SK-N-SH (cell line): ENCODE measurements at regions of chr1 and their contacts with region 1.

Region 1: DNA sequence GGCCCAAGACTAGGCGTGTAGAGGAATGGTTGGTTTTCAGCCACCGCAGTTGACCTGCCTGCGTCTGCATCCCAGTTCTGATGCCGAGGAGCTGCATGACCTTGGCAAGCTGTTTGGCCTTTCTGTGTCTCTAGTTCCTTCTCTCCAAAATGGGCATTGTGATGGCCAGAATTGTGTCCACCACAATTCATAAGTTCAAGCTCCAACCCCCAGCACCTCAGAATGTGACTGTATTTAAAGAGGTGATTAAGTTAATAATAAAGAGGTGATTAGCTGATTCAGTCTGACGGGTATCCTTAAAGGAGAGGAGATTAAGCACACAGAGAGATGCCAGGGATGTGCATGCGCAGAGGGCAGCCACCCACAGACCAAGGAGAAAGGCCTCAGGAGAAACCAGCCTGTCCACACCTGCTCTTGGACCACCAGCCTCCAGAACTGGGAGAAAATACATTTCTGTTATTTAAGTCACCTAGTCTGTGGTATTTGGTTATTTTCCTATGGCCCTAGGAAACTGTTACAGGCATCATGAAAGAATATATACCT is 28.5 kb downstream of the MAB21L3 start:
- DNase-seq: no peak
- H3K4me3 ChIP-seq: no peak overlapping the region
- H3K27ac ChIP-seq: no peak overlapping the region
- H3K4me1 ChIP-seq: peaks cover 0 to 3% of the 10 kb centered on the region in 2 experiments; a peak in 1 of 4 replicates
- H3K27me3 ChIP-seq: no peaks in the 10 kb centered on the region
- CTCF ChIP-seq: no peak
- EP300 ChIP-seq: no peak
- RAD21 ChIP-seq: no peak

Region 2: GRCh38 chr1:115952645-115953044 is 187.0 kb before region 1 on chr1:
- CTCF ChIA-PET with region 1: no interaction called
- POLR2A ChIA-PET with region 1: no interaction called
- DNase-seq: no peak
- H3K4me3 ChIP-seq: no peak overlapping the region
- H3K27ac ChIP-seq: no peak overlapping the region
- H3K4me1 ChIP-seq: no peaks in the 10 kb centered on the region
- H3K27me3 ChIP-seq: no peaks in the 10 kb centered on the region
- CTCF ChIP-seq: no peak
- EP300 ChIP-seq: no peak
- RAD21 ChIP-seq: no peak

Region 3: GRCh38 chr1:116122955-116123757 is 16.5 kb before region 1 on chr1:
- CTCF ChIA-PET with region 1: interaction called, 42 read pairs
- POLR2A ChIA-PET with region 1: no interaction called
- DNase-seq: peak; percentile 60
- H3K4me3 ChIP-seq: no peak overlapping the region
- H3K27ac ChIP-seq: no peak overlapping the region; a peak in 1 of 4 replicates
- H3K4me1 ChIP-seq: peaks cover 0 to 12% of the 10 kb centered on the region in 2 experiments; a peak in 2 of 4 replicates
- H3K27me3 ChIP-seq: 0 out of 2 replicates have a peak, but pooled peaks cover 6% of the 10 kb centered on the region
- CTCF ChIP-seq: no peak
- EP300 ChIP-seq: 0 out of 4 replicates have a peak, but pooled peaks of 1 of the 2 experiments have one; percentile 28
- RAD21 ChIP-seq: no peak

Region 4: DNA sequence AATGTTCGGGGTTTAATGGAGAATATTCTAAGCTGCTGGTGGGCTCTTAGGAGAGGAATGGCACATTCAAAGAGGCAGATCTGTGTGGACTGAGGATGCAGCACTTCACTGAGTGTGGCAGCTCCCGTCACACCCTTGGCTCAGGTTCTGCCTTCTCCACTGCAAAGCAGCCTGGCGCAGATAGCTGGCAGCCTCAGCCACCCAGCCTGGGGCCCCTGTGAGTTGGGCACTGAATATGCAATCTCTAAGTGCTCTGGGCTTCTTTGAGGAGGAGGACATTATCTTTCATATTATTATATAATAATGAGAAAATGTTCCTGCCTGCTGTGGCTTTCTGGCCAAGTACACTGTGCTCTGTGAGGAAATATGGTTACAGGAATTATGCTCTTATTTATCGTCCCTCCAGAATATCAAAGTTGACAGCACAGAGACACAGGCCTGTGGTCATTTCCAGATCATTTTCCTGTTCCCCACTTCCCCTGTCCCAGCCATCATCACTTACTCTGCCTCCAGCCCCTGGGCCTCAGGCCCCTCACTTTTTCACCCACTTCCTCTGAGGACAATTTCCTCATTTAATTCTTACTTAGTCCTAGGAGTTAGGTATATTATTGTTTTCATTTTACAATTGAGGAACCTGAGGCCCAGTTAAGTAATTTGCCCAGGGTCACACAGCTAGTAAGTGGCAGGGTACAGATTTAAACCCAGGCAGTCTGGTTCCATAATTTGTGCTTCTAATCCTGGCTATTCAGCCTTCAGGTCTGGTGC is 25.1 kb after region 1 on chr1:
- CTCF ChIA-PET with region 1: interaction called, 25 read pairs
- POLR2A ChIA-PET with region 1: no interaction called
- DNase-seq: peak; percentile 55
- H3K4me3 ChIP-seq: no peak overlapping the region
- H3K27ac ChIP-seq: peak overlapping the region in 1 of 2 experiments; percentile 69; a peak in 2 of 4 replicates
- H3K4me1 ChIP-seq: peaks cover 0 to 26% of the 10 kb centered on the region in 2 experiments; a peak in 1 of 4 replicates
- H3K27me3 ChIP-seq: no peaks in the 10 kb centered on the region
- CTCF ChIP-seq: no peak
- EP300 ChIP-seq: no peak
- RAD21 ChIP-seq: no peak

Region 5: DNA sequence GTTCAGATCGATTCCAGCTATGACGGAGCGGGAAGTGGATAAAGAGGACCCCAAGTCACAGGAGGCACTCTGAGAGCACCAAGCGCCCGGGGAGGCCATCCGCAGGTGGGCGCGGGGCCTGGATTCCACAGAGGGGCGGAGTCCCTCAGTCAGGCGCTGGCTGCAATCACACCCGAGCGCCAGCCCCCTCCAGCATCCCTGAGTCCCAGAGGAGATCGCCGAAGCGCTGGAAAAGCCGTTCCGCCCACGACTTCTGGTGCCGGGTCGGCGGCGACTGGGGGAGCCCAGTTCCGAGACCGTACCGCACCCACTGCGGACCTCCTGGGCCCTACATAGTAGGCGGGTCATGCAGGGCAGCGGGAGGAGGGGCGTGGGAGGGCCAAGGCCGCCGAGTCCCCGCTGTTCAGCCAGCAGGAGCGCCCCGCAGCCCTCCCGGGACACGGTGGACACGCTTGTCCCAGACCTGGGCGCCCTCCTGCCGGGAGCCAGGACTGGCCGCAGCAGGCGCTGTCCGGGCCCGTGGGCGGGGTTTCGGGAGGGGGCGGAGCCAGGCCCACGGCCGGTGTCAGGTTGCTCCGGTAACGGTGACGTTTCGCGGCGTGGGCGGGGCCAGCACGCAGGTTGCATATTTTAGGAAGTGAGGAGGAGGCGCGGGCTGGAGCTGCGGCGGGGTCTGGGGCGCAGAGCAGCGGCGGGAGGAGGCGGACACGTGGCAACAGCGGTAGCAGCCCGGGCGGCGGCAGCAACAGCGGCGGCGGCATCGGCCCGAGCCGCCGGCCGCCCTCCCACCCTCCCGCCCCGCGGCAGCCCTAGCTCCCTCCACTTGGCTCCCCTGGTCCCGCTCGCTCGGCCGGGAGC is 233.2 kb after region 1 on chr1 and contains the start of gene ATP1A1:
- CTCF ChIA-PET with region 1: interaction called, 16 read pairs
- POLR2A ChIA-PET with region 1: interaction called, 3 read pairs
- DNase-seq: peak; percentile 98
- H3K4me3 ChIP-seq: peak within 1 kb of the TSS; percentile 60 to 71
- H3K27ac ChIP-seq: peak within 1 kb of the TSS; percentile 83 to 98
- H3K4me1 ChIP-seq: peaks cover 29 to 36% of the 10 kb centered on the region in 2 experiments
- H3K27me3 ChIP-seq: no peaks in the 10 kb centered on the region
- CTCF ChIP-seq: no peak
- EP300 ChIP-seq: no peak
- RAD21 ChIP-seq: no peak; the same call in 1 of the 2 replicates
- polyA plus RNA-seq, gene ATP1A1: 233 and 235 TPM in 2 replicates

Region 6: DNA sequence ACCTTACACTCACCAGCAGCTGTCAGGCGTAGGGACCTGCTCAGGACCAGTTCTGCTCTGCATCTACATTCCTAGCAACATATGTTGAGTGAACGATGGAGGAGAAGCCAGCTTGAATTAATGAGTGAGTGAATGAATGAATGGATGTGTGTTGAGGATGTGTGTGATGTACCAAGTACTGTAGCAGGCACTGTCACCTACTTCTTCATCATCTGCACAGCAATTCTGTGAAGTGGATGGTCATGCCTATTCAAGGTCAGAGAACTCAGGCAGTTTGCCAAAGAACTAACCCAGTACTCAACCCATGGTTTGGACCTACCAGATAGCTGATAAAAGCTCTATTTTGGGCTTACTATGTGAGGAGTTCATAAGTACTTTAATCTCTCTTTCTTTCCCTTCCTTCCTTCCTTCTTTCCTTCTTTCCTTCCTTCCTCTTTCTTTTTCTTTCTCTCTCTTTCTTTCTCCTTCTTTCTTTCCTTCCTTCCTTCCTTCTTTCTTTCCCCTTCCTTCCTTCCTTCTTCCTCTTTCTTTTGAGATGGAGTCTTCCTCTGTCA is 290.2 kb after region 1 on chr1:
- CTCF ChIA-PET with region 1: interaction called, 13 read pairs
- POLR2A ChIA-PET with region 1: no interaction called
- DNase-seq: no peak
- H3K4me3 ChIP-seq: no peak overlapping the region
- H3K27ac ChIP-seq: no peak overlapping the region
- H3K4me1 ChIP-seq: peaks cover 0 to 10% of the 10 kb centered on the region in 2 experiments; a peak in 1 of 4 replicates
- H3K27me3 ChIP-seq: no peaks in the 10 kb centered on the region; the same call in 1 of the 2 replicates
- CTCF ChIP-seq: no peak
- EP300 ChIP-seq: no peak
- RAD21 ChIP-seq: no peak

Region 7: GRCh38 chr1:116574581-116575291 is 435.1 kb after region 1 on chr1:
- CTCF ChIA-PET with region 1: interaction called, 11 read pairs
- POLR2A ChIA-PET with region 1: no interaction called
- DNase-seq: peak; percentile 81
- H3K4me3 ChIP-seq: peak overlapping the region in 1 of 2 experiments; percentile 39; a peak in 1 of 4 replicates
- H3K27ac ChIP-seq: peak overlapping the region in 1 of 2 experiments; percentile 43; a peak in 1 of 4 replicates
- H3K4me1 ChIP-seq: peaks cover 3 to 23% of the 10 kb centered on the region in 2 experiments; a peak in 2 of 4 replicates
- H3K27me3 ChIP-seq: no peaks in the 10 kb centered on the region
- CTCF ChIP-seq: peak; percentile 93
- EP300 ChIP-seq: no peak
- RAD21 ChIP-seq: peak; percentile 96